ENCODE measurements at regions of chr17 and their contacts with region 1.

Region 1: GRCh38 chr17:72145981-72146380 is 25.2 kb downstream of the SOX9 start:
- DNase-seq: no peak
- H3K4me3 ChIP-seq: no peak overlapping the region
- H3K27ac ChIP-seq: no peak overlapping the region
- H3K4me1 ChIP-seq: peaks cover 4% of the 10 kb centered on the region
- H3K27me3 ChIP-seq: no peaks in the 10 kb centered on the region
- CTCF ChIP-seq: no peak

Region 2: GRCh38 chr17:72030067-72030899 is 115.7 kb before region 1 on chr17:
- intact Hi-C with region 1: no loop called
- DNase-seq: peak; percentile 16
- H3K4me3 ChIP-seq: peak overlapping the region; percentile 62
- H3K27ac ChIP-seq: no peak overlapping the region
- H3K4me1 ChIP-seq: peaks cover 7% of the 10 kb centered on the region
- H3K27me3 ChIP-seq: peaks cover 30% of the 10 kb centered on the region
- CTCF ChIP-seq: peak; percentile 52

Region 3: GRCh38 chr17:72205357-72205756 is 59.4 kb after region 1 on chr17:
- intact Hi-C with region 1: loop called (anchors 10 kb)
- DNase-seq: no peak
- H3K4me3 ChIP-seq: no peak overlapping the region
- H3K27ac ChIP-seq: no peak overlapping the region
- H3K4me1 ChIP-seq: no peaks in the 10 kb centered on the region
- H3K27me3 ChIP-seq: peaks cover 45% of the 10 kb centered on the region
- CTCF ChIP-seq: no peak